Right ventricle myocardium inferior (tissue), 1 donor: ENCODE measurements at regions of chr11 and their contacts with region 1.

Region 1: GRCh38 chr11:73787643-73788537 is at the start of gene MRPL48:
- DNase-seq: peak; percentile 95
- ATAC-seq: peak; percentile 99
- total RNA-seq, gene MRPL48: 45.1 TPM

Region 2: DNA sequence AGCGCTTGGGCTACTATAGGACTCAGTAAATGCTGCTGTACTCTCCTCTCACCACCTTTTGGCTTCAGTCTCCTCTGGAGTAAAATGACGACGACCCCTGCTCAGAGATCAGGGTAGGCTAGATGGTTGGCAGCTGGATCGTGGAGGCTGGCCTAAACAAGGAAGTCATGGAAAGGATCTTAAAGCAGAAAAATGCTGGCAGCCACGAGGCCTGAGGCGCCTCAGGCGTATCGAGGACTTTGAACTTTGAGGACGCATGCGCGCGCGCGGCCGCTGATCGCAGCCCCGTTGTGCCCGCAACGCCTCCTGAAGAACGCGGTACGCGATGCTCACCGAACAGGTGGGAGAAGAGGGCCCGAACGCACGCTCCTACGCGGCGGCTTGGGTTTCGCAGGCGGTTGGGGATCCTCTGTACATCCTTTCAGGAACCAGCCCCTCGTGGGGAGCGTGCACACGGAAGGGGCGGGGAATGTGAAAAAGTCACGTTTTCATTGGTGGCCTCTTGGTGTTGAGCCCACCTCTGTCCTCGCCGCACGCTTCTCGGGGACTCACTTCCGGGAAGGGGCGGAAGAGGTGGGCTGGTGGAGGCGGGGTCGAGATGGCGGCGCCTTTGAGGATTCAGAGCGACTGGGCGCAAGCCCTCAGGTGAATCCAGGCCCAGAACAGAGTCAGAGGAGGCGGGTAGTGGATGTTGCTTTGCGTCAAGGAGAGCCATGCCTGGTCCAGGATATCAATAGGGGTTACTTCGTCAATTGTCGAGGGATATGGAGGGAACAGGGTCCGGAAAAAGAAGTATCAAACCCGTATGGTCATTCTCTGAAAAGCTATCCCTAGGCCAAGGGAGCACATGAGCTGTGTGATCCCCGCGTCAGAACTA is 88.8 kb after region 1 on chr11 and contains the starts of genes COA4 and PAAF1:
- intact Hi-C with region 1: loop called (anchors 5 kb)
- DNase-seq: peak; percentile 94
- ATAC-seq: peak; percentile 99
- total RNA-seq, gene COA4: 51.2 TPM
- total RNA-seq, gene PAAF1: 10.7 TPM